Heart right ventricle (tissue), 16 donors: ENCODE measurements at regions of chr9 and their contacts with region 1.

Region 1: DNA sequence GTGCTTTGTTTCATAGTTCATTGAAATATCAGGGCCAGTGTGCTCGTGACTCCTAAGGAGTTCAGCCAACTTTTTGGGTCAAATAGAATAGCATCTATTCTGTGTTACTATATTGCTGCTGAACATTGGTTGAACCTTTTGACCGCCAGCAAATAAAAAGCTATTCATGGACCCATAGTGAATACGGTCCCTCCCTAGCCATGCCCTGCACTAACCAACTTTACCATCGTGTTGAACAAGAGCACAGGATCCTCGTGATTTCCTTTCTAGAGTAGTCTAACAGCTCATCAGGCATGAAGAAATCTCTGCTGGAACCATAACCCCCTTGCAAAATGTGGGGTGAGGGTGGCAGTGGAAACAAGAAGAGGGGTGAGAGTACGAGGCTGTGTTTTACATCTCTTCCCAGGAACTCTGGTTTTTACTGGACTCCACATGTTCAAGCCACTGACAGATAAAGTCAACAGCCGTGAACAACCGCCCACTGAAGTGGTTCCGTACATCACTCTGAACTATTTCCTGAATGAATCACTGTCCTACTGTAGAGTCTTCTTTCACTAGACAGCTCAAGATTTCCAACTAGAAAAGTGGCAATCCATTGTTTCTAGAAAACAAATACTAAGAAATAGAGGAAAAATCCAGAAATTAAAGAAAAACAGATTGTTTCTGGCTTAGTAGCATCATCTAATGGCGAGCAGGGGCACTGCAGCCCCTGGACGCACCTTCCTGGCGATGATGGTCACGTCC is 70.1 kb upstream of the SPATA31E1 start:
- DNase-seq: no peak
- ATAC-seq: peak in 6 of 8 donors; percentile 34 to 61 (median 50)
- H3K4me3 ChIP-seq: no peak overlapping the region
- H3K27ac ChIP-seq: no peak overlapping the region
- H3K4me1 ChIP-seq: peaks cover 0 to 12% (median 0%) of the 10 kb centered on the region in 9 donors
- H3K27me3 ChIP-seq: peaks cover 0 to 16% (median 8%) of the 10 kb centered on the region in 7 donors
- CTCF ChIP-seq: peak; percentile 62 to 93 (median 86)

Region 2: DNA sequence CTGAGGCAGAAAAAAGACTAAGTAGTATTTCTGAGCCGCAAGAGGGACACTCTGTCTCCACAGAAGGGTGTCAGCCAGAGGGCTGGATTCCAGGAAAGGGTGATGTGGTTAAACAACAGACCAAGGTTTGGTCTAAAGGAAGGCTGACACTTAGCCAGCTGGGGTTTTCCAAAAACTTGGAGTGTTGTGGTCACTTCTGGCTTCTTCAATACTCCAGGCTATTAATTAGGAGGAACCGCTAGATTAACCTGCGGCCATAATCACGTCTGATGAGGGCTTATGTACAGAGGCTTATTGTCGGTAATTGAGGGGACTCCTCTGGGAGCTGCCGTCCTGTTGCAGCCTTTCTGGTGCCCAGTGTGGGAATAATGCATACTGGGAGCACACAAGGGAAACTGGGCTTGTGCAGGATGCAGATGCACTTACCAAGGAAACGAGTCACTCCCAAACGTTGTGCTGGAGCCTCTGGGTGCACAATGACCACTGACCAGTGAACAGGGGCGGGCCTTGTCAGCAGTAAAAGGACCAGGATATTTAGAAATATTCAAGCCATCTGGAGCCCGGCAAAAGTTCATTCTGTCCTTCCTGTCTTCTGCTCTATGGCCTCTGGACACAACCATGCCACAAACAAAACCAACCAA is 1388.2 kb before region 1 on chr9:
- intact Hi-C with region 1: loop called in 1 of 10 experiments (anchors 10 kb)
- DNase-seq: no peak
- ATAC-seq: peak in 4 of 8 donors; percentile 16 to 67 (median 52)
- H3K4me3 ChIP-seq: no peak overlapping the region
- H3K27ac ChIP-seq: no peak overlapping the region
- H3K4me1 ChIP-seq: peaks cover 0 to 5% (median 0%) of the 10 kb centered on the region in 9 donors
- H3K27me3 ChIP-seq: peaks cover 0 to 9% (median 4%) of the 10 kb centered on the region in 7 donors
- CTCF ChIP-seq: no peak

Region 3: GRCh38 chr9:87336914-87337333 is 475.6 kb before region 1 on chr9:
- intact Hi-C with region 1: loop called in 1 of 10 experiments (anchors 5 kb)
- DNase-seq: peak in 1 of 2 donors; percentile 40
- ATAC-seq: peak in 7 of 8 donors; percentile 55 to 85 (median 79)
- H3K4me3 ChIP-seq: peak overlapping the region in 9 of 10 donors; percentile 6 to 42 (median 33)
- H3K27ac ChIP-seq: no peak overlapping the region
- H3K4me1 ChIP-seq: peaks cover 0 to 15% (median 7%) of the 10 kb centered on the region in 9 donors
- H3K27me3 ChIP-seq: peaks cover 0 to 30% (median 20%) of the 10 kb centered on the region in 7 donors
- CTCF ChIP-seq: peak; percentile 41 to 73 (median 67)

Region 4: DNA sequence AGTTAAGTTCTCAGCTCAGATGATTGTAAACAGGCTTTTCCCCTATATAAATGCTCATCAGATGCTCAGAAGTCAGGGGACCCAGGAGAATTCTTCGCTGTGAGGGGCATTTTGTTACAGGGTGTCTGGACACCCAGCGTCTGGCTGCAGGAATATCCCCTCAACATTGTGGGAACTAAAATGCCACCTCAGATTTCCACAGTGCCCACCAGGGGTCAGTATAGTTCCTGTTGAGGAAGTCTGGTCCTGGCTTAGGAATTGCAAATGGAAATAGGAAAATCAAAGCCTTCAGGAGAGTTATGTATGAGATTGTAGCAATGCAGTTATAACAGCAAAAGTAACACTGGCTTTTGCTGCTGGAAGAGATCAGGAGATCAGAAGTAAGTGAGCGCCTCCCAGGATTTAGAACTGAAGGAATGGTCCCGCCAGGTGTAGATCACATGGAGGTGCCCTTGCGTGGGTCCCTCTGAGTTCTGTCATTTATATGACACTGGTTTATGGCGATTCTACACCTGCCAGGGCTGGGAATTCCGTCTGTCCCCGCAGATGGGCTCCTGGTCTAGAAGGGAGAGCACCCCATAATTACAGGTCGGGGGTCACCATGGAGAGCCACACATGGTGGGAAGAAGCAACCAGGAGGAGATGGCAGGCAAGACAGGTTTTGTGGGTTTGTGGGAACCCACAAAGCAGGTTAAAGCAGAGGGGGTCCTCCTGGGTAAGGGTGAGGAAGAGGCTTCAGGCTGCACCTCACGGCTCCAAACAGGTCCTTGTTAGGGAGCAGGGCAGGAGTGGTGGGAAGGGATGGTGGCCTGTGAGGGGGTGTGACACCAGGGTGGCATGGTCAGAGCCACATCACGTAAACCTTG is 133.7 kb before region 1 on chr9:
- intact Hi-C with region 1: loop called in 9 of 10 experiments (anchors 1 to 5 kb)
- DNase-seq: peak in 1 of 2 donors; percentile 67
- ATAC-seq: peak in 6 of 8 donors; percentile 31 to 54 (median 43)
- H3K4me3 ChIP-seq: no peak overlapping the region
- H3K27ac ChIP-seq: no peak overlapping the region
- H3K4me1 ChIP-seq: peaks cover 0 to 7% (median 0%) of the 10 kb centered on the region in 9 donors
- H3K27me3 ChIP-seq: no peaks in the 10 kb centered on the region
- CTCF ChIP-seq: peak; percentile 51 to 87 (median 82)

Region 5: DNA sequence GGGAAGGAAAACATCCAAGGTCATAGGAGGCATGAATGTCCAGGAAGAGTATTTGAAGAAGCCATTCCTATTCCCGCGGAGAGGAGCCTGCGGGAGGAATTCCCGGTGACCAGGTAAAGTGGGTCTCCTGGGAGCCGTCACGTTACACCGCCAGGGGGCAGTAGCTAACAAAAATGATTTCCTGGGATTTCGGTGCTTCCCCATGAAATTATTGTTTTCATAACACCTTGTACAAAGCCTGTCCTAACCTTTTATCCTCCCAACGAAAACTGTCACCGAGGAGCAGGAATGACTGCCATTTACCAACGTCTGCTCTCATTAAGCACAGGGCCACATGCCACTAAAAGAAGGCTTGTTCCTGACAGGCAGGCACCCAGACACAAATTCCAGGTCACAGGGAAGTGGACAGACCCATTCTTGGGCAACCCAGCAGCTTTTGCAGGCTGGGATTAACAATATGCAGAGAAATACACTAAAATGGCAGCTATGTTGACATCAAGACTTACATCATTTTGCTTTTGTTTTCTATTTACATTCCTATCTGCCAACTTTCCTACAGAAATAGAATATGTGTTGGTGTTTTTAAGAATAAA is 127.8 kb before region 1 on chr9:
- intact Hi-C with region 1: loop called in 9 of 10 experiments (anchors 1 to 5 kb)
- DNase-seq: peak in 1 of 2 donors; percentile 24
- ATAC-seq: peak in 6 of 8 donors; percentile 9 to 76 (median 41)
- H3K4me3 ChIP-seq: no peak overlapping the region
- H3K27ac ChIP-seq: peak overlapping the region in 1 of 10 donors; percentile 79
- H3K4me1 ChIP-seq: peaks cover 0 to 27% (median 0%) of the 10 kb centered on the region in 9 donors
- H3K27me3 ChIP-seq: no peaks in the 10 kb centered on the region
- CTCF ChIP-seq: peak; percentile 57 to 83 (median 73)